ENCODE measurements at regions of chr7 and their contacts with region 1.

Region 1: DNA sequence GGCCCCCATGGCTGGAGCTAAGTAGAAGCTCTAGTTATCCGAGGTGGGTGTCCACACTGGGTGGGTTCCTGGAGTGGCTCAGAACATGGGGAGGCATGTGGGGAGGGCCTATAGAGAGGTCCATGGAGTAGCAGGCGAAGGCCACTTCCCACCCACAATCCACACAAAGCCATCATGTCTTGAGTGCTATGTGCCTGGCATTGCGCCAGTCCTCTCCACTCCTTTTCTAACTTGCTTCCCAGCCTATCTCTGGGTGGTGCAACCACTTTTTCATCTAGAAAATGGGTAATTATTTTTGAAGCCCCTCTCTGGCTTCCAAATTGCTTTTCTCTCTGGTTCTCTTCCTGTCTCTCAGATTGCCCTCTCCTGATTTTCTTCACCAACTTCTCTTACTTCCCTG is 263.6 kb downstream of the PHTF2 start:
- DNase-seq: no peak
- ATAC-seq: no peak
- H3K4me3 ChIP-seq: no peak overlapping the region
- H3K27ac ChIP-seq: no peak overlapping the region
- H3K4me1 ChIP-seq: no peaks in the 10 kb centered on the region
- H3K27me3 ChIP-seq: no peaks in the 10 kb centered on the region
- CTCF ChIP-seq: no peak
- POLR2A ChIP-seq: no peak
- RAD21 ChIP-seq: no peak

Region 2: GRCh38 chr7:78125884-78126283 is 63.7 kb after region 1 on chr7:
- CTCF ChIA-PET with region 1: no interaction called
- POLR2A ChIA-PET with region 1: no interaction called
- dilution Hi-C with region 1: no loop called
- in situ Hi-C with region 1: no loop called
- intact Hi-C with region 1: loop called (anchors 1 kb)
- DNase-seq: peak; percentile 93
- ATAC-seq: peak; percentile 93
- H3K4me3 ChIP-seq: no peak overlapping the region
- H3K27ac ChIP-seq: no peak overlapping the region
- H3K4me1 ChIP-seq: peaks cover 7% of the 10 kb centered on the region
- H3K27me3 ChIP-seq: no peaks in the 10 kb centered on the region
- CTCF ChIP-seq: no peak
- POLR2A ChIP-seq: no peak
- RAD21 ChIP-seq: no peak